ENCODE measurements at regions of chr16 and their contacts with region 1.

Region 1: DNA sequence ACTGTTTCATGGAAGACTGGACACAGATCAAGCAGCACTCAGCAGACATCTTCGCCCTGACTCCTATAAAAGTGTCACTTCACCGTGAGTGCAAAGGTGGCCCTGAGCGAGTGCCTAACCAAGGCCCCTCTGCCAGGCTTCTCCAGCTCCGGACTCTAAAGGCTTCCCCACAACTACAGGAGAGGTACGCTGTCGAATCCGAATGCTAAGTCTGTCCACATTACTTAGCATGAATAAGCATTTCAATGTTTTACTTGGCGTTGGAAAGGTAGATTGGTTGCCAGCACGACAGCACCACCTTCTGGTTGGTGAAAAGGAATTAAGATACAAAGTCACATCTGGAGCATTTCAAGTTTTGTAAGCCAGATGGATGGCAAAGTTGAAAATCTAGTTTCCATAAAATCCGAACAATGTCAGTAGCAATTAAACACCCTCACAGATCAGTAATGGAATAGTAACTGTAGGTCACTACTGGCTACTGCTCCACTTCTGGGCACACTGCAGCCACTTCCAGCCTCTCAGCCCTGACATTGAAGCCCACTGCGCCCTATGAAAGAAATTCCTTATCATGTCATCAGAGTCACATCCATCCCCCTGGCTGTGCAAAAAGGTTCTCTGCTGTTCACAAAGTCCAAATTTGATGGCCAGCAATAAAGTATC is 100.9 kb downstream of the PARN start:
- DNase-seq: peak; percentile 84
- H3K4me3 Mint-ChIP-seq: peak overlapping the region; percentile 27
- H3K27ac Mint-ChIP-seq: no peak overlapping the region
- H3K4me1 Mint-ChIP-seq: peaks cover 27% of the 10 kb centered on the region
- H3K27me3 Mint-ChIP-seq: no peaks in the 10 kb centered on the region
- CTCF ChIP-seq: peak; percentile 75

Region 2: GRCh38 chr16:14249291-14250032 is 279.7 kb before region 1 on chr16:
- CTCF ChIA-PET with region 1: no interaction called
- intact Hi-C with region 1: loop called (anchors 2 kb)
- DNase-seq: peak; percentile 54
- H3K4me3 Mint-ChIP-seq: no peak overlapping the region
- H3K27ac Mint-ChIP-seq: peak overlapping the region; percentile 47
- H3K4me1 Mint-ChIP-seq: no peaks in the 10 kb centered on the region
- H3K27me3 Mint-ChIP-seq: no peaks in the 10 kb centered on the region
- CTCF ChIP-seq: peak; percentile 86

Region 3: GRCh38 chr16:14285513-14286385 is 243.4 kb before region 1 on chr16:
- CTCF ChIA-PET with region 1: interaction called, 3 read pairs
- intact Hi-C with region 1: loop called (anchors 5 kb)
- DNase-seq: peak; percentile 96
- H3K4me3 Mint-ChIP-seq: peak overlapping the region; percentile 82
- H3K27ac Mint-ChIP-seq: peak overlapping the region; percentile 93
- H3K4me1 Mint-ChIP-seq: peaks cover 8% of the 10 kb centered on the region
- H3K27me3 Mint-ChIP-seq: no peaks in the 10 kb centered on the region
- CTCF ChIP-seq: no peak

Region 4: GRCh38 chr16:14300705-14301168 is 228.4 kb before region 1 on chr16:
- CTCF ChIA-PET with region 1: interaction called, 6 read pairs
- intact Hi-C with region 1: loop called (anchors 1 kb)
- DNase-seq: peak; percentile 76
- H3K4me3 Mint-ChIP-seq: peak overlapping the region; percentile 82
- H3K27ac Mint-ChIP-seq: peak overlapping the region; percentile 76
- H3K4me1 Mint-ChIP-seq: peaks cover 15% of the 10 kb centered on the region
- H3K27me3 Mint-ChIP-seq: no peaks in the 10 kb centered on the region
- CTCF ChIP-seq: peak; percentile 62

Region 5: GRCh38 chr16:14399378-14400284 is 129.5 kb before region 1 on chr16:
- CTCF ChIA-PET with region 1: no interaction called
- intact Hi-C with region 1: loop called (anchors 10 kb)
- DNase-seq: peak; percentile 73
- H3K4me3 Mint-ChIP-seq: peak overlapping the region; percentile 31
- H3K27ac Mint-ChIP-seq: peak overlapping the region; percentile 87
- H3K4me1 Mint-ChIP-seq: peaks cover 30% of the 10 kb centered on the region
- H3K27me3 Mint-ChIP-seq: no peaks in the 10 kb centered on the region
- CTCF ChIP-seq: no peak

Region 6: GRCh38 chr16:14486520-14487303 is 42.4 kb before region 1 on chr16:
- CTCF ChIA-PET with region 1: no interaction called
- intact Hi-C with region 1: loop called (anchors 5 kb)
- DNase-seq: peak; percentile 79
- H3K4me3 Mint-ChIP-seq: peak overlapping the region; percentile 40
- H3K27ac Mint-ChIP-seq: peak overlapping the region; percentile 40
- H3K4me1 Mint-ChIP-seq: peaks cover 43% of the 10 kb centered on the region
- H3K27me3 Mint-ChIP-seq: no peaks in the 10 kb centered on the region
- CTCF ChIP-seq: no peak

Measured in Calu3 (cell line).